Activated CD4-positive, alpha-beta memory T cell treated with anti-CD3 and anti-CD28 coated beads, Interleukin-2, amount 10 ng/mL, durations not matched to agents 7 days and 5 days (primary cell): ENCODE measurements at regions of chrX and their contacts with region 1.

Region 1: DNA sequence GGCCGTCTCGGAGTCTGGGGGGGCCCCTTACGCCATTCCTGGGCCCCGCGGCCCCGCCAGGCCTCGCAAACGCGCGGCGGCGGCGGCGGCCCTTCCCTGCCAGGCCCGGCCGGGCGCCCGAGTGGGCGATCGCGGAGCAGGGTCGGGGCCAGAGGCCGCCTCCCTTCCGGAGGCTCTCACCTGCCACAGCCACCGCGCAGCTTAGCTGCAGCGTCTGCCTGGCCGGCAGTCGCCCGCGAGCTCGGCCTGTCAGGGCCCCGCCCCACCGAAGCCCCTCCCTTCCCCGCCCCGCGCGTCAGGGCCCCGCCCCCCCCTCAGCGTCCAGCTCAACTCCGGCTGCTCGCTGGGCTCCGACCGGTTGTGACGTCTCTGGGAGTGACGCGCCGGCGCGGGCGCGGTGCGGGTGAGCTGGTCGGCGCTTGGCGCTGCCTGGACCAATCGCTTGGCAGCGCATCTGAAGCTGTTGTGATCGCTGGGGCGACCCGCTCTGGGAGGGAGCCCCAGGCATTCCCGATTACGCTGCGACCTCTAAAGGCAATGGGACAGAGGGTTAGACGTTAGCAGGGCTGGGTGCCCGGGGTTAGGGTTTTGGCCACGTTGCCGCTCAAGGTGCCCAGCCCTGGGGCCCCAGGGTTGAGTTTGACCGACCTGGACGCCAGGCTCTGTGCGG is at the start of gene SLC10A3:
- DNase-seq: peak; percentile 92
- H3K4me3 Mint-ChIP-seq: peak within 1 kb of the TSS; percentile 87
- H3K27ac Mint-ChIP-seq: peak within 1 kb of the TSS; percentile 92
- H3K4me1 Mint-ChIP-seq: peaks cover 23% of the 10 kb centered on the region
- H3K27me3 Mint-ChIP-seq: no peaks in the 10 kb centered on the region
- total RNA-seq, gene SLC10A3: 27.0 to 27.6 TPM

Region 2: GRCh38 chrX:154411322-154411980 is 79.1 kb before region 1 on chrX and contains the start of gene TAFAZZIN:
- CTCF ChIA-PET with region 1: no interaction called
- POLR2A ChIA-PET with region 1: interaction called, 18 read pairs
- DNase-seq: peak; percentile 83
- H3K4me3 Mint-ChIP-seq: peak within 1 kb of the TSS; percentile 93
- H3K27ac Mint-ChIP-seq: peak within 1 kb of the TSS; percentile 92
- H3K4me1 Mint-ChIP-seq: peaks cover 18% of the 10 kb centered on the region
- H3K27me3 Mint-ChIP-seq: no peaks in the 10 kb centered on the region
- total RNA-seq, gene TAFAZZIN: 93.7 to 93.9 TPM

Region 3: DNA sequence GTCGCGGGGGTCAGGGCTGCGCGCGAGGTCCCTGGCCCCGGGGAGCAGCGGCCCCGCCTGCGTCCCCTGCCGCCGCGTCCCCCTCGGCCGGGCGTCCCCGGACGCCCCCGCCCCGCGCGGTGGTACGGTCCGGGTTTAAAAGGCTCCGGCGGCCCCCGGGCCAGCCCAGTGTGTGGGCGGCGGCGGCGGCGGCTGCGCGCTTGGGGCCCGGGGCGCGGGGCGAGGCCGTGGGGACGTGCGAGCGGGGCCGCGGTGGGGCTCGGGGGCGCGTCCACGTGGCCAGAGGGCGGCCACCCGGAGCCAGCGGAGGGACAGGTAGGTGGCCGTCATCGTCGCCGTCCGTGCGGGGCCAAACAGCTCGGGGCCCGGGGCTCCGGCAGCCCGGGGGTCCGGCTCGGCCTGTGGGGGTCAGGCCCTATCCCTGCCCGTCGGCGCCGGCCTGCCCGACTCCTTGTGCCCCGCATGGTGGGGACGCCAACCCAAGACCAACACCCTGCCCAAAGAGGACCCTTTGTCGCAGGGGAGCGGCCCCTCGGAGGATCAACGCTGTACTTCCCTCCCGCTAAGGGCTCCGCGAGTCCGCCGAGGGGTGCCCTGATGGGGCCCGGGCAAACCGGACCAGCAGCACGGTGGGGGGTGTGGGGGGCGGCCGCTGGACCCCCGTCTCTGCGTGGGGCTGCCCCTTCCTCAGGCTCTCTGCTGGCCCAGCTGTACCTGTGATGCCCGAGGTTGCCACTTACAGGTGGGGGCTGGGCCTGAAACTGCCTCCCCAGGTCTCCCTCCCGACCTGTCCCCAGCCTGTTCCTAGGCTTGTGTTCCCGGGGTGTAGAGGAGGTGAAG is 32.2 kb before region 1 on chrX and contains the start of gene PLXNA3:
- CTCF ChIA-PET with region 1: no interaction called
- POLR2A ChIA-PET with region 1: interaction called, 14 read pairs
- DNase-seq: peak; percentile 62
- H3K4me3 Mint-ChIP-seq: peak within 1 kb of the TSS; percentile 92
- H3K27ac Mint-ChIP-seq: peak within 1 kb of the TSS; percentile 88
- H3K4me1 Mint-ChIP-seq: peaks cover 13% of the 10 kb centered on the region
- H3K27me3 Mint-ChIP-seq: no peaks in the 10 kb centered on the region
- total RNA-seq, gene PLXNA3: 49.3 to 52.8 TPM

Region 4: DNA sequence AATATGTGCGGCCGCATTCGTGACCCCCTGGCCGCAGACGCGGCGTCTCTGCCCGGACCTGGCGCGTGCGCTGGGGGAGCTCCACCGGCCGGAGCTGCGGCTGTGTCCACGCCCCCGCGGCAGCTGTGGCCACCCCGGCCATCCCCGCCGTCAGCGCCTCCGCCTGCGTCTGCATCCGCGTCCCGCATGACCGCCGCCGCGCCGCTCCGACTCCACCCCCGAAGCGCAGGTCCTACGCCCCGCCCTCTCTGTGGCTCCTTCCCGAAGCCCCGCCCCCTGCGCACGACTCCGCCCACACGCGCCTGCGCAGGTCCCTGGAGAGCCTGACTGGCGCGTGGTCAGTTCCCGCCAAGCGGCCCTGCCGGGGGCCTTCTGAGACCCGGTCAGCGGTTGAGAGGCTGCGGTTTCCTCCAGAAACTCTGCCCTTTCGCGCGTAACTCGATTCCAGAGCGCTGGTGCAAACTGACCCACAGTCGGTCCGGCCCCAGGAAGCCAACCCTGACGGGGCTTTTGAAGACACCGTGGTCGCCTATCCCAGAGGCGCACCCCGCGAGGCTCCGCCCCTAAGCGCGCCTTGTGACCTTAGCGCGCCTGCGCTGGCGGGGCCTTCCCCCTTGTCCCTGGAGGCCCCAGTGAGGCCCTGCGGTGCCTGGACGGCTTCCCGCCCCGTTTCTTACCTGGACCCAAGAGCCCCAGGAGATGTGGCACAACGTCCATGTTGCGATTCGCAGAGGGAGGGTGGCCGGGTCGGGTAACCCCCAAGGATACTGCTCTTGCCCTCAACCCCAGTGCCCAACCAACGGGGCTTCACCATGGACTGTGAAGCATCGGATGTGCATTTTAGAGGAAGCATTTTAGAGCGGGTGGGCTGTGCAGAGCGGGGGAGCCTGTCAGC is 11.6 kb before region 1 on chrX and contains the start of gene LAGE3:
- CTCF ChIA-PET with region 1: interaction called, 4 read pairs
- POLR2A ChIA-PET with region 1: interaction called, 27 read pairs
- DNase-seq: peak; percentile 95
- H3K4me3 Mint-ChIP-seq: peak within 1 kb of the TSS; percentile 76
- H3K27ac Mint-ChIP-seq: peak within 1 kb of the TSS; percentile 79
- H3K4me1 Mint-ChIP-seq: peaks cover 30% of the 10 kb centered on the region
- H3K27me3 Mint-ChIP-seq: no peaks in the 10 kb centered on the region
- total RNA-seq, gene LAGE3: 28.1 to 29.9 TPM

Region 5: DNA sequence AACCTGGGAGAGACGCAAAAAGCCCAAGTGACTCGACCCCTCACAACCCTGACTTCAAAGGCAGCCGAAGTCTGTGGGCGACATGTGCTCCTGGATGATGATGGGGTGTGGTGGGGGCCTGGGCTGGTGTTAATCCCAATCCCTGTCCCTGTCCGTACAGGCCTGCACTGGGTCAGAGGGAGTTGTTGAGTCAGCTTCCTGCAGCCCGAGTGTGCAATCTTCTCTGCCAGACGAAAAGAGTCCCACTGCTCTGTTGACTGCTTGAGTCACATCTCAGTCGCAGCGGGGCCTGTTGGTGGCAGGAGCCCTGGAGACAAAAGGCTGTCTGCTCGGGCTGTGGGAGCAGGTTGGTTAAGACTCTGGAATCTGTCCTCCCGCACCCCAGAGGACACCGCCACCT is 15.2 kb after region 1 on chrX:
- CTCF ChIA-PET with region 1: no interaction called
- POLR2A ChIA-PET with region 1: interaction called, 10 read pairs
- DNase-seq: no peak
- H3K4me3 Mint-ChIP-seq: no peak overlapping the region
- H3K27ac Mint-ChIP-seq: no peak overlapping the region
- H3K4me1 Mint-ChIP-seq: peaks cover 8% of the 10 kb centered on the region
- H3K27me3 Mint-ChIP-seq: no peaks in the 10 kb centered on the region

Region 6: GRCh38 chrX:154515878-154516655 is 25.5 kb after region 1 on chrX and contains the start of gene FAM3A:
- CTCF ChIA-PET with region 1: interaction called, 3 read pairs
- POLR2A ChIA-PET with region 1: interaction called, 17 read pairs
- DNase-seq: peak; percentile 94
- H3K4me3 Mint-ChIP-seq: peak within 1 kb of the TSS; percentile 80
- H3K27ac Mint-ChIP-seq: peak within 1 kb of the TSS; percentile 81
- H3K4me1 Mint-ChIP-seq: peaks cover 30% of the 10 kb centered on the region
- H3K27me3 Mint-ChIP-seq: no peaks in the 10 kb centered on the region
- total RNA-seq, gene FAM3A: 24.9 to 29.0 TPM